RWPE1 (cell line): ENCODE measurements at regions of chr9 and their contacts with region 1.

Region 1: GRCh38 chr9:124551472-124552272 is 44.5 kb upstream of the NR5A1 start:
- DNase-seq: peak; percentile 82
- H3K27ac ChIP-seq: no peak overlapping the region
- CTCF ChIP-seq: peak; percentile 72

Region 2: GRCh38 chr9:124532897-124533296 is 18.8 kb before region 1 on chr9:
- CTCF ChIA-PET with region 1: interaction called, 13 read pairs
- POLR2A ChIA-PET with region 1: no interaction called
- DNase-seq: no peak
- H3K27ac ChIP-seq: no peak overlapping the region
- CTCF ChIP-seq: no peak

Region 3: GRCh38 chr9:124583128-124583527 is 31.5 kb after region 1 on chr9:
- CTCF ChIA-PET with region 1: no interaction called
- POLR2A ChIA-PET with region 1: no interaction called
- DNase-seq: no peak
- H3K27ac ChIP-seq: no peak overlapping the region
- CTCF ChIP-seq: no peak

Region 4: GRCh38 chr9:124708633-124709291 is 157.1 kb after region 1 on chr9:
- CTCF ChIA-PET with region 1: interaction called, 21 read pairs
- POLR2A ChIA-PET with region 1: interaction called, 3 read pairs
- DNase-seq: no peak
- H3K27ac ChIP-seq: no peak overlapping the region
- CTCF ChIP-seq: no peak